Activated naive CD4-positive, alpha-beta T cell treated with anti-CD3 and anti-CD28 coated beads, Interleukin-2, amount 10 ng/mL, durations not matched to agents 7 days and 5 days (primary cell): ENCODE measurements at regions of chr10 and their contacts with region 1.

Region 1: DNA sequence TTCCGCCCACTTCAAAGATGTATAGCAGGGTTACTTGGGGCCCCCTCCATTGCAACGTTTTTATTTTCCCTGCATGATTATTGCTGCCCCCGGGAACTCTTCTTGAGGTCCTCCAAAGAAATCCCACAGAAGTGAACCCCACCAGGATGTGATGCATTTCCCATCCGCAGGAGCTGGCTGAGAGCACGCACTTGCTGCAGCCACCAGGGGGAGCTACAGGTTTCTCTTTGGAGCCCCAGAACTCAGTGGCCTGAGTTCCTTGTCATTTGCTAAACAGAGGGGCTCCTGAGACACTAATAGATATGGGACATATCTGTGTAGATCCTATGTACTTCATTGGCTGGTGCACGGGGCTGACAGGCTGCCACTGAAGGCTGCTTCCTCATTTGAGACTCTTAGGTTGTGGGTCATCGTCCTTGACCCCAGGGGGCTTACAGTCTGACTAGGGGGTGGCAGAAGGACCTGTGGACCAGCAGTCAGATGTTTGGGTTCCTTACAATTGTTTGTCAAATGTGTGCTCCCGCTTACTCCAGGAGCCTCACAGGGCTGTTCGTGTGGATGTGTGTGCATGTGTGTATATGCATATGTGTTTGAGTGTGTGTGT is 52.3 kb upstream of the ENO4 start:
- DNase-seq: peak; percentile 78
- H3K4me3 Mint-ChIP-seq: no peak overlapping the region
- H3K27ac Mint-ChIP-seq: no peak overlapping the region
- H3K4me1 Mint-ChIP-seq: no peaks in the 10 kb centered on the region
- H3K27me3 Mint-ChIP-seq: peaks cover 20% of the 10 kb centered on the region

Region 2: GRCh38 chr10:116574797-116575196 is 222.2 kb before region 1 on chr10:
- CTCF ChIA-PET with region 1: no interaction called
- DNase-seq: no peak
- H3K4me3 Mint-ChIP-seq: no peak overlapping the region
- H3K27ac Mint-ChIP-seq: no peak overlapping the region
- H3K4me1 Mint-ChIP-seq: no peaks in the 10 kb centered on the region
- H3K27me3 Mint-ChIP-seq: no peaks in the 10 kb centered on the region

Region 3: GRCh38 chr10:116753759-116754158 is 43.3 kb before region 1 on chr10:
- CTCF ChIA-PET with region 1: no interaction called
- DNase-seq: no peak
- H3K4me3 Mint-ChIP-seq: no peak overlapping the region
- H3K27ac Mint-ChIP-seq: no peak overlapping the region
- H3K4me1 Mint-ChIP-seq: no peaks in the 10 kb centered on the region
- H3K27me3 Mint-ChIP-seq: peaks cover 40% of the 10 kb centered on the region

Region 4: DNA sequence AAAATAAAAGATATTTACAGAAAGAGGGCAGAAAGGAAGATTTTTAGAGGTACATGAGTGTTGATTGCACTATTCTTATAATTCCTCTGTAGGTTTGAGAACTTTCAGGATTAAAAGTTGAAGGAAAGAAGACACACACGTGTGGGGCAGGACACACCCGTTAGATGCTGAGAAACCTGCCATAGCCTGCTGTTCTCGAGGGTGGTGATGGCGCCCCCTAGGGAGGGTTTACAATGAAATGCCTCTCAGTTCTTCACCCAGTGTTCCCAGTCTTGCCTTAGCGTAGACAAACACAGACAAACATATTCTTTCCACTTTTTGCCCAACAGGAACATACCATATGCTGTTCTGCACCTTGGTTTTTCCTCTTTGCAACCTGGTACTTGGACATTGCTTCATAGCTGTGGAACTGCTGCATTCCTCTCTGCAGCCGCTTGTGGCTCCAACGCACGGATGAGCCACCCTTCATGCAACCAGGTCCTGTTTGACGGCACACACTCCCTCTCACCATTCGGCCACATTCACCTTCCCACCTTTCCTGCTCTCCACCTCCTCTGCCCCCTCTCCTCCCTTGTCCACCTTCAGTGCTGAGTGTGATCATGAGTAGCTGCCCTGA is 31.4 kb before region 1 on chr10:
- CTCF ChIA-PET with region 1: no interaction called
- DNase-seq: peak; percentile 70
- H3K4me3 Mint-ChIP-seq: no peak overlapping the region
- H3K27ac Mint-ChIP-seq: no peak overlapping the region
- H3K4me1 Mint-ChIP-seq: no peaks in the 10 kb centered on the region
- H3K27me3 Mint-ChIP-seq: peaks cover 73% of the 10 kb centered on the region

Region 5: GRCh38 chr10:117174439-117175214 is 377.6 kb after region 1 on chr10:
- CTCF ChIA-PET with region 1: interaction called, 85 read pairs
- DNase-seq: peak; percentile 86
- H3K4me3 Mint-ChIP-seq: peak overlapping the region; percentile 75
- H3K27ac Mint-ChIP-seq: no peak overlapping the region
- H3K4me1 Mint-ChIP-seq: peaks cover 18% of the 10 kb centered on the region
- H3K27me3 Mint-ChIP-seq: peaks cover 51% of the 10 kb centered on the region